H1 (cell line): ENCODE measurements at regions of chr10 and their contacts with region 1.

Region 1: DNA sequence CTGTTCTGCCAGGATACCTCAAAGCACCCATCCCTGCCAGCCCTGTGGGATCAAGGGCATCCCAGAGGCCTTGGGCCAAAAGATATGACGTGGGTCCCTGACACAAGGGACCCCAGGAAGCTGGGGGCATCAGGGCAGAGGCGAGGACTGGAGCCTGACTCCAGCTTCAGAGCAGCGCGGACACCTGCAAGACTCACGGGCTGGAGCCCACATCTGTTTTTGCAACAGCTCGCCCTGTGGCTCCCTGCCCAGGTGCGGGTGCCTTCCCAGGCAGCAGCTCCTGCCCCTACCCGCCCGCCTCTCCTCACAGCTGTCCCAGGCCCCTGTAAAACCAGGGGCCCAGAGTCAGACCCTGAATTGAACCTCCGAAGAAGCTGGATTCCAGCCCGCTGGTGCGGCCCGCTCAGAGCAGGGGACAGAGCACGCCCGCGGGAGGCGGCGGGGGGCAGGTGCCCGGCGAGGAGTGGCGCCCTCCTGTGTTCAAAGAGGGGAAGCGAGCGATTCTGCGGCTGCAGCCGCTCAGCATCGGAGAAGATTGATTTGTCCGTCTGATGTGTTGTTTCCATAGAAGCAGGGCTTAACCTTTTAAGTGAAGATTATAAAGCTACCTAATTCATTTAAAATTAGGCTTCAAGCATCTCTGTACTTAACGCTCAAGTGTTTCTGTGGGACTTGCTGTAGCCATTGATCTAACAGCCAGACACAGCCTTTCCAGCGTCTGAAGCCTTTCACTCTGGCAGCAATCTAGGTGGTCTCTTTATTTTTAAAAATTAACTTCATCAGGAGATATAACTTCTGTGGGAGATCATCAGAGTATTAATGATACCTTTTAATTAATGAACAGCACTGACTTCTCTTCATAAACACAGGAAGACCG is 88.4 kb downstream of the BEND7 start:
- DNase-seq: peak in 1 of 2 experiments; percentile 91
- H3K4me3 ChIP-seq: peak overlapping the region; percentile 33 to 61 (median 54); a peak in 7 of 8 replicates
- H3K27ac ChIP-seq: no peak overlapping the region
- H3K4me1 ChIP-seq: peaks cover 4 to 7% (median 5%) of the 10 kb centered on the region in 4 experiments; a peak in 6 of 7 replicates
- H3K27me3 ChIP-seq: peaks cover 7 to 23% (median 19%) of the 10 kb centered on the region in 4 experiments
- CTCF ChIP-seq: peak; percentile 85 to 90 (median 89)
- EP300 ChIP-seq: no peak
- POLR2A ChIP-seq: no peak
- RAD21 ChIP-seq: peak; percentile 69 to 81

Region 2: GRCh38 chr10:13414894-13415293 is 25.5 kb before region 1 on chr10:
- CTCF ChIA-PET with region 1: interaction called, 132 read pairs
- POLR2A ChIA-PET with region 1: interaction called, 3 read pairs
- DNase-seq: peak in 1 of 2 experiments; percentile 77
- H3K4me3 ChIP-seq: no peak overlapping the region
- H3K27ac ChIP-seq: no peak overlapping the region
- H3K4me1 ChIP-seq: no peaks in the 10 kb centered on the region
- H3K27me3 ChIP-seq: no peaks in the 10 kb centered on the region; a peak in 1 of 7 replicates
- CTCF ChIP-seq: peak; percentile 68 to 79 (median 75)
- EP300 ChIP-seq: no peak
- POLR2A ChIP-seq: no peak
- RAD21 ChIP-seq: peak; percentile 56 to 74

Region 3: GRCh38 chr10:13453896-13454295 is 13.5 kb after region 1 on chr10:
- CTCF ChIA-PET with region 1: interaction called, 72 read pairs
- POLR2A ChIA-PET with region 1: interaction called, 4 read pairs
- DNase-seq: peak in 1 of 2 experiments; percentile 41
- H3K4me3 ChIP-seq: no peak overlapping the region
- H3K27ac ChIP-seq: no peak overlapping the region
- H3K4me1 ChIP-seq: no peaks in the 10 kb centered on the region; a peak in 1 of 7 replicates
- H3K27me3 ChIP-seq: 0 out of 7 replicates have a peak, but pooled peaks cover 0 to 2% (median 0%) of the 10 kb centered on the region in 4 experiments
- CTCF ChIP-seq: no peak
- EP300 ChIP-seq: no peak
- POLR2A ChIP-seq: no peak
- RAD21 ChIP-seq: no peak

Region 4: DNA sequence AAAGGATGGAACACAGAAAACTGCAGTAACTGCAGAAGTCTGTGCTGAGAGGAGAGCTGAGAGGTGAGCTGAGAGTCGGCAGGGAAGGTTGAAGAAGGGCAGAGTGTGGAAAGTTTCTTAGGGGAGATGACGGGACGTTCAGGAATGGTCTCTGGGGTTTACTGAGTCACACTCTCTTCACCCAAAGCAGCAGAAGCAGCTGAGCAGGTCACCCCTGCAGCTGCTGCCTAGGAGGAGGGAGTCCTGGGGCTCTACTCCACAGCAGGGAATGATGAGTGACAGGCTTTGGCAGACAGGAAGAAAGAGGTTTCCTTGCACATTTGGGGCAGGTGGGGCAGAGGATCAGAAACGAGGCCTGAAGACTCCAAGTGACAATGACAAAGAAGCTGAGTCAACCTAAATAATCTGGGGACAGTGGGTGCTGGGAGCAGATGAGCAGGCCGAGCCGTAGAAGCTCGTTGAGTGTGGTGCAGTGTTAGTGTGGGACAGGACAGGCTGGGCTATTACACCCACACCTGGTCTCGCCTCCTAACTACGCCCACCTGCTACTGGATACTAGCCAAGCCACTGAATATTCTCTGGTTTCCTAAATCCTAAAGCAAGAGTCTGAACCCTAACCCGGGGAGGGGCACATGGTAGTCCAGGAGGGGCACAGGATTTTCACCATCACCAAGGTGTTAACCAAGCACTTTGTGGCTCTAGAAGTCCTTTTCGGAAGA is 63.5 kb after region 1 on chr10:
- CTCF ChIA-PET with region 1: interaction called, 11 read pairs
- POLR2A ChIA-PET with region 1: no interaction called
- DNase-seq: no peak
- H3K4me3 ChIP-seq: no peak overlapping the region
- H3K27ac ChIP-seq: no peak overlapping the region
- H3K4me1 ChIP-seq: no peaks in the 10 kb centered on the region
- H3K27me3 ChIP-seq: no peaks in the 10 kb centered on the region; a peak in 1 of 7 replicates
- CTCF ChIP-seq: no peak
- EP300 ChIP-seq: no peak
- POLR2A ChIP-seq: no peak
- RAD21 ChIP-seq: no peak

Region 5: GRCh38 chr10:13604357-13605040 is 164.1 kb after region 1 on chr10:
- CTCF ChIA-PET with region 1: no interaction called
- POLR2A ChIA-PET with region 1: no interaction called
- DNase-seq: no peak
- H3K4me3 ChIP-seq: no peak overlapping the region
- H3K27ac ChIP-seq: no peak overlapping the region
- H3K4me1 ChIP-seq: peaks cover 0 to 5% (median 2%) of the 10 kb centered on the region in 4 experiments; a peak in 2 of 7 replicates
- H3K27me3 ChIP-seq: no peaks in the 10 kb centered on the region
- CTCF ChIP-seq: no peak
- EP300 ChIP-seq: no peak
- POLR2A ChIP-seq: no peak
- RAD21 ChIP-seq: no peak